Activated CD8-positive, alpha-beta memory T cell treated with anti-CD3 and anti-CD28 coated beads, Interleukin-2, amount 10 ng/mL, durations not matched to agents 7 days and 5 days (primary cell): ENCODE measurements at regions of chr4 and their contacts with region 1.

Region 1: DNA sequence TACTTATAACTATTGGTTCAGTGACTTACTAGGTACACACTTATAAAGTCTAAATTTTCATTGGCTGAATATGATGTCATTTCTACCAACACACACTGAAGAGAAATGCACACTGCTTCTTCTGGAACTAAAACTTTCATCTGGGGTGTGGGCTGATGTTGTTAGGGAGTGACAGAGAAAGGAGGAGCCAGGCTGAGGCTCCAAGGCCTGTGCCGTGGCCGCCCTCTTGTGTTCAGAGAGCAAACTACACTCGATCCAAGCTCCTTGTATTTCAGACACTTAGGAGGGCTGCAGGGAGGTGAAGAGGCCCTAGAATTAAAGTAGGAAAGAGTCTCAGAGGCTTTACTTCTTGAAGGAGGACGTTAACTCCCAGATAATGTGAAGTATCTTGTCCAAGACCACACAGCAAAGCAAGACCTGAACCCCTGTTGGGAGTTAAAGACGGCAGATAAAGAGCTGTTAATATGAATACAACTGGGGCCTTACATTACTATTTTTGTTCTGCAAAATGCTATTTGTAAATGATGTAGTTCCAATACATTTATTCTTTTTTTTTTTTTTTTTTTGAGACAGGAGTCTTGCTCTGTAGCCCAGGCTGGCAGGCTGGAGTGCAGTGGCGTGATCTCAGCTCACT is 137.5 kb downstream of the AFAP1 start:
- DNase-seq: peak; percentile 86
- ATAC-seq: peak; percentile 91
- H3K4me3 Mint-ChIP-seq: no peak overlapping the region
- H3K27ac Mint-ChIP-seq: peak overlapping the region; percentile 31
- H3K4me1 Mint-ChIP-seq: peaks cover 10% of the 10 kb centered on the region
- H3K27me3 Mint-ChIP-seq: no peaks in the 10 kb centered on the region

Region 2: DNA sequence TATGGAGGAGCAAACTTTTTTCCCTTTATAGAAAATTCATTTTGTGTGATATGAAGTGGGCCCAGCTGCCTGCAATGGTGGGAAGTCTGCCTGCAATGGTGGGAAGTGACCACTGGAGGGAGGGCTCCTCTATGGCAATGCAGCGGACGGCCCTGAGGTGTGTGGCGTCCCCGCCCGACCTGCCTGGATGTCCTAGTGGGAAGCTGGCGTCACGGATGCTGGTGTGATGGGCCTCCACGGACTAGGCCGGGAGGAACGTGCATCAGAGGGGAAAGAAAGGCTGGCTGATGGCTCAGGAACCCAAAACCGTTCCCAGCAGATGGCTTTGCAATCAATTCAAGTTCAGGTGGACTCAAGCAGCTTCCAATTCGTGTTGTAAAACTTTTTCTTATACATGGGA is 40.5 kb before region 1 on chr4:
- CTCF ChIA-PET with region 1: interaction called, 82 read pairs
- DNase-seq: peak; percentile 60
- ATAC-seq: peak; percentile 37
- H3K4me3 Mint-ChIP-seq: no peak overlapping the region
- H3K27ac Mint-ChIP-seq: no peak overlapping the region
- H3K4me1 Mint-ChIP-seq: peaks cover 19% of the 10 kb centered on the region
- H3K27me3 Mint-ChIP-seq: no peaks in the 10 kb centered on the region

Region 3: GRCh38 chr4:7815562-7815961 is 13.4 kb after region 1 on chr4:
- CTCF ChIA-PET with region 1: interaction called, 47 read pairs
- DNase-seq: no peak
- ATAC-seq: no peak
- H3K4me3 Mint-ChIP-seq: no peak overlapping the region
- H3K27ac Mint-ChIP-seq: no peak overlapping the region
- H3K4me1 Mint-ChIP-seq: peaks cover 17% of the 10 kb centered on the region
- H3K27me3 Mint-ChIP-seq: no peaks in the 10 kb centered on the region

Region 4: GRCh38 chr4:7843831-7844593 is 41.8 kb after region 1 on chr4:
- CTCF ChIA-PET with region 1: interaction called, 128 read pairs
- DNase-seq: peak; percentile 80
- ATAC-seq: peak; percentile 93
- H3K4me3 Mint-ChIP-seq: no peak overlapping the region
- H3K27ac Mint-ChIP-seq: no peak overlapping the region
- H3K4me1 Mint-ChIP-seq: peaks cover 14% of the 10 kb centered on the region
- H3K27me3 Mint-ChIP-seq: no peaks in the 10 kb centered on the region

Region 5: GRCh38 chr4:7876201-7876875 is 74.1 kb after region 1 on chr4:
- CTCF ChIA-PET with region 1: interaction called, 42 read pairs
- DNase-seq: peak; percentile 63
- ATAC-seq: peak; percentile 85
- H3K4me3 Mint-ChIP-seq: peak overlapping the region; percentile 53
- H3K27ac Mint-ChIP-seq: peak overlapping the region; percentile 74
- H3K4me1 Mint-ChIP-seq: peaks cover 41% of the 10 kb centered on the region
- H3K27me3 Mint-ChIP-seq: peaks cover 2% of the 10 kb centered on the region